PC-3 (cell line): ENCODE measurements at regions of chr18 and their contacts with region 1.

Region 1: GRCh38 chr18:68489018-68489792 is 225.7 kb downstream of the TMX3 start:
- DNase-seq: peak; percentile 9
- ATAC-seq: no peak; the same call in 1 of the 2 replicates
- H3K4me3 ChIP-seq: no peak overlapping the region
- H3K27ac ChIP-seq: no peak overlapping the region
- H3K4me1 ChIP-seq: peaks cover 9% of the 10 kb centered on the region
- H3K27me3 ChIP-seq: no peaks in the 10 kb centered on the region
- CTCF ChIP-seq: no peak

Region 2: DNA sequence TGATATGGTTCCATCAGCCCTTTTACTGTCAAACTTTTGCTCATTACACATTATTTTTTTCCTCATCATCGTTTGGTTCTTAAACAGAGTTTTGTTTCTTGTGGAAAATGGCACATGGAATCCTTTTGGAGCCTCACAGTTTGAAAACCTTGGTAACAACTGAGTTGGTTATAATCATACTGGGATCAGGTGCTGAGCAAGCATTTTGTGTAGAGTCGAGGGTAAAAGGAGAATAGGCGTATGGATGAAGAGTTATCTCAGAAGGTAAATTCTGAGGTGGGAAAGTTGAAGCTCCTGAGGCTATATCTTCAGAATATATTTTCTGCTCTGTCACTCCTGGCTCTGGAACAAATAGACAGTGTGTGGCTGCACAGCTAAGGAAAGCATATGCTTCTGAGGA is 698.7 kb before region 1 on chr18:
- CTCF ChIA-PET with region 1: no interaction called
- POLR2A ChIA-PET with region 1: interaction called, 28 read pairs
- intact Hi-C with region 1: no loop called
- DNase-seq: no peak
- ATAC-seq: no peak
- H3K4me3 ChIP-seq: no peak overlapping the region
- H3K27ac ChIP-seq: no peak overlapping the region
- H3K4me1 ChIP-seq: no peaks in the 10 kb centered on the region
- H3K27me3 ChIP-seq: no peaks in the 10 kb centered on the region
- CTCF ChIP-seq: no peak

Region 3: GRCh38 chr18:68568364-68569155 is 79.4 kb after region 1 on chr18:
- CTCF ChIA-PET with region 1: no interaction called
- POLR2A ChIA-PET with region 1: no interaction called
- intact Hi-C with region 1: no loop called
- DNase-seq: no peak
- ATAC-seq: no peak
- H3K4me3 ChIP-seq: no peak overlapping the region
- H3K27ac ChIP-seq: no peak overlapping the region
- H3K4me1 ChIP-seq: no peaks in the 10 kb centered on the region
- H3K27me3 ChIP-seq: no peaks in the 10 kb centered on the region
- CTCF ChIP-seq: no peak